Activated CD4-positive, alpha-beta T cell treated with anti-CD3 and anti-CD28 coated beads for 36 hours (primary cell): ENCODE measurements at regions of chr10 and their contacts with region 1.

Region 1: GRCh38 chr10:59880971-59881510 is 25.3 kb downstream of the CCDC6 start:
- DNase-seq: peak; percentile 90
- ATAC-seq: peak; percentile 88
- H3K4me3 Mint-ChIP-seq: peak overlapping the region; percentile 53
- H3K27ac Mint-ChIP-seq: peak overlapping the region; percentile 85
- H3K4me1 Mint-ChIP-seq: peaks cover 87% of the 10 kb centered on the region
- H3K27me3 Mint-ChIP-seq: no peaks in the 10 kb centered on the region

Region 2: GRCh38 chr10:59648711-59649201 is 232.3 kb before region 1 on chr10:
- CTCF ChIA-PET with region 1: no interaction called
- POLR2A ChIA-PET with region 1: no interaction called
- intact Hi-C with region 1: no loop called
- DNase-seq: no peak
- ATAC-seq: no peak
- H3K4me3 Mint-ChIP-seq: no peak overlapping the region
- H3K27ac Mint-ChIP-seq: no peak overlapping the region
- H3K4me1 Mint-ChIP-seq: no peaks in the 10 kb centered on the region
- H3K27me3 Mint-ChIP-seq: no peaks in the 10 kb centered on the region

Region 3: GRCh38 chr10:59709395-59710125 is 171.5 kb before region 1 on chr10 and contains the start of gene SLC16A9:
- CTCF ChIA-PET with region 1: no interaction called
- POLR2A ChIA-PET with region 1: no interaction called
- intact Hi-C with region 1: loop called in 1 of 2 experiments (anchors 1 kb)
- DNase-seq: peak; percentile 83
- ATAC-seq: peak; percentile 94
- H3K4me3 Mint-ChIP-seq: peak within 1 kb of the TSS; percentile 68
- H3K27ac Mint-ChIP-seq: peak within 1 kb of the TSS; percentile 10
- H3K4me1 Mint-ChIP-seq: no peaks in the 10 kb centered on the region
- H3K27me3 Mint-ChIP-seq: peaks cover 52% of the 10 kb centered on the region
- total RNA-seq, gene SLC16A9: 1.0 to 1.4 TPM

Region 4: GRCh38 chr10:59830601-59831259 is 50.3 kb before region 1 on chr10:
- CTCF ChIA-PET with region 1: interaction called, 4 read pairs
- POLR2A ChIA-PET with region 1: no interaction called
- intact Hi-C with region 1: loop called in 1 of 2 experiments (anchors 1 kb)
- DNase-seq: peak; percentile 44
- ATAC-seq: no peak
- H3K4me3 Mint-ChIP-seq: no peak overlapping the region
- H3K27ac Mint-ChIP-seq: no peak overlapping the region
- H3K4me1 Mint-ChIP-seq: peaks cover 40% of the 10 kb centered on the region
- H3K27me3 Mint-ChIP-seq: no peaks in the 10 kb centered on the region

Region 5: GRCh38 chr10:59865101-59865500 is 15.9 kb before region 1 on chr10:
- CTCF ChIA-PET with region 1: interaction called, 6 read pairs
- POLR2A ChIA-PET with region 1: interaction called, 3 read pairs
- intact Hi-C with region 1: loop called (anchors 1 to 2 kb)
- DNase-seq: no peak
- ATAC-seq: peak; percentile 34
- H3K4me3 Mint-ChIP-seq: no peak overlapping the region
- H3K27ac Mint-ChIP-seq: no peak overlapping the region
- H3K4me1 Mint-ChIP-seq: peaks cover 65% of the 10 kb centered on the region
- H3K27me3 Mint-ChIP-seq: no peaks in the 10 kb centered on the region